ENCODE measurements at regions of chr1 and their contacts with region 1.

Region 1: DNA sequence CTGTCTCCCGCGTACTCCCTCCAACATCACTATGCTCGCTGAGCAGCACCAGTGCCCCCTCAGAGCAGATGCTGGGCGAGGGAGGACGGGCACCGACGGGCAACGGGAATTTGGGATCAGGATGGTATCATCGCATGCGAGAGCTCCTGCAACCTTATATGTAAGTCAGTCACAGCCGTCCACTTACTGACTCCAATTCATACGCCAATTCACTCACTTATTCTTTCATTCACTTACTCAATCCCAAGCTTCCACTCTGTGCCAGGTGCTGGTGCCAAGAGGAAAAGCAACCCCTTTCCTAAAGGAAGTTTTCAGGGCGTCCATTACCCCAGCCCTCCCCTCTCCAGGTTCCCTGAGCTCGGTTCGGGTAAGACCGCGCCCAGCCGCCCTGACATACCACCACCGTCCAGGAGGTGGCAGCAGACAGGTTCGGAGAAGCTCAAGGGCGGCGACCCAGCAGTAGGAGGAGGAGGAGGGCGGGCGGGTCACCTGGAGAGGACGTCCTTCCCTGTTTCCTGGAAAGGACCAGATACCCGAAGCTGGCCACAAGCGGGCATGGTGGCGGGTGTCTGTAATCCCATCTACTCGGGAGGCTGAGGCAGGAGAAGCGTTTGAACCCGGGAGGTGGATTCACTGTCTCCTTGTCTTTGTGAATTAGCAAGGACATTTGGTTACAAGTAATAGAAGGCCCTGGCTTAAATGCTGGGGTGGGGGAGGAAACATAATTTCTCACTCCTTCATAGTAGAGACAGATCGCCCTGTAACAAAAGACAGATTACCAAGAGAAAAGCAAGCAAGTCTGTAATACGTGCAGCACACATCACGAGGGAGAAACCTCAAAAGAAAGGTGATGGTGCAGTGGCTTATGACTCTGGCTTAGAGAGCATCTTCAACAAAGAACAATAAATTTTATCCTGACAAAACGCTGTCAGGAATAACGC is 7.6 kb upstream of the IL22RA1 start:
- DNase-seq: peak; percentile 88 to 94 (median 92)
- ATAC-seq: peak; percentile 99
- H3K4me3 ChIP-seq: no peak overlapping the region; the same call in 1 of the 2 replicates
- H3K27ac ChIP-seq: no peak overlapping the region; the same call in 2 of the 3 replicates
- H3K4me1 ChIP-seq: peaks cover 7 to 9% of the 10 kb centered on the region in 2 experiments; a peak in 3 of 5 replicates
- H3K27me3 ChIP-seq: peaks cover 34 to 56% of the 10 kb centered on the region in 2 experiments
- CTCF ChIP-seq: peak; percentile 83 to 95 (median 91)
- EP300 ChIP-seq: no peak
- POLR2A ChIP-seq: no peak
- RAD21 ChIP-seq: peak; percentile 38 to 64

Region 2: DNA sequence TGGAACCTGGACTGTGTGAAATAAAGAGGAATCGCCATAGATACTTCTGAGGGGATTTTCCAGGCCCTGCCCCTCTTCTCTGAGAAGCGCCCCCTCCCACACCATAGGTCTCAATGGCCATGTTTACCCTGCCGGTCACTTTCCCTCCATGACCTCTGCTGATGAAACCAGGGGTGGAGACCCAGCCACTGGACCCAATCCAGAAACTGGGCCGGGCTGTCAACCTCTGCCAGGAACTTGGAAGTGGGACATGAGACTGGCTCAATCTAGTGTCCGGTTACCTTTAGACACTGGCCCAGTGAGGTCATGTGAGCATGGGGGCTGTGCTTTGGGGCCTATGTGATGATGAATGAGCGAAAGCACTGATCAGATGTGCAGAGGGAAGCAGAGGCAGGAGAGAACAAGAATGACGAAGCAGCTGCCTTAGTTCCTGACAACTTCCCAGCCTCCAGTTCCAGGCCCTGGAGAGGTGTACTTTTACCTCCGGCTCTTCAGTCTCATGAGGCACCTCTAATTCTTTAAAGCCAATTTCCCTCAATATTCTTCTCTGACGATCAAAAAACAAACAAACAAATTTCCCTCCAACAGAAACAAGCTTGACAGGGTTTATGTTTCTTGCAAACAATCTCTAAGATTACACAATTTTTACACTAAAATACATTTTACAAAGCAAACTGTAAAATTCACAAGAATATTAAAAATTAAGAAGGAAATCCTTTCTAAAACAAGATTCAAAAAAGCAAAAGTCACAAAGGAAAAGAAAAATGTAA is 671.4 kb before region 1 on chr1:
- CTCF ChIA-PET with region 1: no interaction called
- POLR2A ChIA-PET with region 1: no interaction called
- in situ Hi-C with region 1: no loop called
- intact Hi-C with region 1: no loop called
- DNase-seq: peak; percentile 82 to 93 (median 86)
- ATAC-seq: peak; percentile 93
- H3K4me3 ChIP-seq: no peak overlapping the region
- H3K27ac ChIP-seq: peak overlapping the region; percentile 75
- H3K4me1 ChIP-seq: peaks cover 28 to 32% of the 10 kb centered on the region in 2 experiments
- H3K27me3 ChIP-seq: no peaks in the 10 kb centered on the region
- CTCF ChIP-seq: no peak
- EP300 ChIP-seq: peak; percentile 42; the same call in 1 of the 2 replicates
- POLR2A ChIP-seq: peak; percentile 61; the same call in 1 of the 2 replicates
- RAD21 ChIP-seq: no peak

Region 3: GRCh38 chr1:24111996-24112779 is 38.3 kb before region 1 on chr1 and contains the start of gene MYOM3:
- CTCF ChIA-PET with region 1: no interaction called
- POLR2A ChIA-PET with region 1: no interaction called
- in situ Hi-C with region 1: no loop called
- intact Hi-C with region 1: no loop called
- DNase-seq: peak; percentile 70 to 81 (median 76)
- ATAC-seq: peak; percentile 99
- H3K4me3 ChIP-seq: no peak within 1 kb of the TSS
- H3K27ac ChIP-seq: no peak within 1 kb of the TSS
- H3K4me1 ChIP-seq: peaks cover 0 to 20% of the 10 kb centered on the region in 2 experiments; a peak in 3 of 5 replicates
- H3K27me3 ChIP-seq: peaks cover 60 to 91% of the 10 kb centered on the region in 2 experiments
- CTCF ChIP-seq: peak; percentile 82 to 89 (median 84)
- EP300 ChIP-seq: no peak
- POLR2A ChIP-seq: no peak
- RAD21 ChIP-seq: peak; percentile 91 to 96
- polyA plus RNA-seq, gene MYOM3: not detected

Region 4: GRCh38 chr1:24201941-24202440 is 51.5 kb after region 1 on chr1:
- CTCF ChIA-PET with region 1: no interaction called
- POLR2A ChIA-PET with region 1: no interaction called
- in situ Hi-C with region 1: no loop called
- intact Hi-C with region 1: loop called (anchors 5 kb)
- DNase-seq: peak; percentile 63 to 80 (median 69)
- ATAC-seq: peak; percentile 78
- H3K4me3 ChIP-seq: no peak overlapping the region
- H3K27ac ChIP-seq: no peak overlapping the region
- H3K4me1 ChIP-seq: no peaks in the 10 kb centered on the region; a peak in 1 of 5 replicates
- H3K27me3 ChIP-seq: peaks cover 16 to 43% of the 10 kb centered on the region in 2 experiments; a peak in 4 of 5 replicates
- CTCF ChIP-seq: peak; percentile 83 to 94 (median 94)
- EP300 ChIP-seq: no peak
- POLR2A ChIP-seq: no peak
- RAD21 ChIP-seq: peak; percentile 93 to 99

Region 5: DNA sequence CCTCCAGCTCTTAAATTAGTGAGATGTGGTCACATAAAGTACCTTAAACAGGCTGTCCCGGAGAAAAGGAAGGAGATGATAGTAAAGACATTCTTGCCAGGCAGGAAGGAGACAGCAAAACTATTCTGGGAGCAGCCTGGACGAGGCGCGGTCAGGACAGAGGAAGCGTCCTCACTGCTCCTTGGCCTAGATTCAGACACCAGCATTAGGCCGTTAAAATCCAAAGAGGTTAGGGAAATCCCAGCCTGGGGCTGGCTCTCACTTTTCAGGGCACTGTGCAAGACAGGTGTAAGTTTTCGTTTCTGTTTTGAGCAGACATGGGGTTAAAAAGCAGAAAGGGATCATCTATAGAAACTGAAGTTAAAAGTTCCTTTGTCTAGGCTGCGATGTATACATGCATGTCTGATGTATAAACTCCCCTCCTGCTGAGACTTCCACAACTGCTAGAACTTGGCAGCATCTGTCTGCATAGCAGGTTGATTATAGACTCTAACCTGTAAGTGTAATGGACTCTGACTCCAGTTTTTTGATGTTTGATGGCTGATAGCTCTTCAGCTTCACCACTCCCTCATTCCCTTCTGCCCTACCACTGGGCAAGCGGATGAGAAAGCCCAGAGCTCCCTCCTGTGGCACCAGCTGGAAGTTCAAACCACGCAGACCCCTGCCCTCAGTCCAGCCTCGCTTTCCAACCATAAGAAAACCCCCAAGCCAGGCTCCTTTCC is 241.5 kb after region 1 on chr1:
- CTCF ChIA-PET with region 1: interaction called, 10 read pairs
- POLR2A ChIA-PET with region 1: interaction called, 3 read pairs
- in situ Hi-C with region 1: no loop called
- intact Hi-C with region 1: no loop called
- DNase-seq: peak; percentile 71 to 74 (median 73)
- ATAC-seq: peak; percentile 95
- H3K4me3 ChIP-seq: no peak overlapping the region
- H3K27ac ChIP-seq: no peak overlapping the region
- H3K4me1 ChIP-seq: no peaks in the 10 kb centered on the region
- H3K27me3 ChIP-seq: peaks cover 0 to 3% of the 10 kb centered on the region in 2 experiments; a peak in 1 of 5 replicates
- CTCF ChIP-seq: peak; percentile 86 to 90 (median 87)
- EP300 ChIP-seq: no peak
- POLR2A ChIP-seq: no peak
- RAD21 ChIP-seq: peak; percentile 83 to 86

Measured in K562 (cell line).